Heart right ventricle (tissue), 16 donors: ENCODE measurements at regions of chr14 and their contacts with region 1.

Region 1: DNA sequence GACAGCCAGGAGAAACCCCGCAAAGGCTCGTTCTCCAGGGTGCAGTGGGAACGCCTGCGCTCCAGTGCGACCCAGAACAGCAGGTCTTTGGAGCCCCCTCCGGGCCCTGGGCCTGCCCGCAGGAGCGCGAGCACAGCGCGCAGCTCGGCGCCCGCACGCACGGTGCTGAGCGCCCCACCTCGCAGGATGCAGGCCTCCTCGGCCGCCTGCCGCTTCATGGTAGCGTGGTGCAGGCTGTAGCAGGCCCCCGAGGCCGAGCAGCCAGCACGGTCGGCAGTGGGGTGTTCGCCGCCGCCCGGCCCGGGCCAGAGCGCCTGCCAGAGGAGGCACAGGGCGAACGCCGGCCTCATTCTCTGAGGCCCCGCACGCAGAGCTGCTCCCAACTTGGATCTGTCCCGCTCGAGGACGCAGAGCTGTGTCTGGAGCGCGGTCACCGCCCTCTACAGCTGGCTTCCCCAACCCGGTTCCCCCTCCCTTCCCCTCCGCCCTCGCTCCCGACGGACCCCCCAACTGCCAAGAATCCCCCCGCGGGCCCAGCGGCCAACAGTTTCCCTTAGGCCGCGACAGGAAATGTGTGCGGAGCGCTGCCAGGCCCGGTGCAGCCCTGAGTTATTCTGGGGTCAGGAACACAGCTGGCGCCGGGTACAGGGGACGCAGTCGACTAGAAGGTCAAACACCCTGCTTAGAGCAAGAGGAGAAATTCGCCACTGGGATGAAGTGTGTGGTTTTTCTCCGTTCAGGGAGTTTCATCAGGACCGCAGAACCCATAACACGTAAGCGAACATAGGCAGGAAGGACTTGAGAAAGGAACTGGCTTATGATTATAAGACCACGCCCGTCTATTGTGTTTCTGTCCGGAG is at the start of gene CLEC14A:
- DNase-seq: peak; percentile 86 to 91
- ATAC-seq: peak; percentile 84 to 96 (median 90)
- H3K4me3 ChIP-seq: peak within 1 kb of the TSS; percentile 53 to 89 (median 72)
- H3K27ac ChIP-seq: peak within 1 kb of the TSS; percentile 93 to 100 (median 98)
- H3K4me1 ChIP-seq: peaks cover 0 to 15% (median 0%) of the 10 kb centered on the region in 9 donors
- H3K27me3 ChIP-seq: peaks cover 0 to 40% (median 14%) of the 10 kb centered on the region in 7 donors
- CTCF ChIP-seq: no peak
- total RNA-seq, gene CLEC14A: 26.6 to 45.9 (median 37.1) TPM

Region 2: DNA sequence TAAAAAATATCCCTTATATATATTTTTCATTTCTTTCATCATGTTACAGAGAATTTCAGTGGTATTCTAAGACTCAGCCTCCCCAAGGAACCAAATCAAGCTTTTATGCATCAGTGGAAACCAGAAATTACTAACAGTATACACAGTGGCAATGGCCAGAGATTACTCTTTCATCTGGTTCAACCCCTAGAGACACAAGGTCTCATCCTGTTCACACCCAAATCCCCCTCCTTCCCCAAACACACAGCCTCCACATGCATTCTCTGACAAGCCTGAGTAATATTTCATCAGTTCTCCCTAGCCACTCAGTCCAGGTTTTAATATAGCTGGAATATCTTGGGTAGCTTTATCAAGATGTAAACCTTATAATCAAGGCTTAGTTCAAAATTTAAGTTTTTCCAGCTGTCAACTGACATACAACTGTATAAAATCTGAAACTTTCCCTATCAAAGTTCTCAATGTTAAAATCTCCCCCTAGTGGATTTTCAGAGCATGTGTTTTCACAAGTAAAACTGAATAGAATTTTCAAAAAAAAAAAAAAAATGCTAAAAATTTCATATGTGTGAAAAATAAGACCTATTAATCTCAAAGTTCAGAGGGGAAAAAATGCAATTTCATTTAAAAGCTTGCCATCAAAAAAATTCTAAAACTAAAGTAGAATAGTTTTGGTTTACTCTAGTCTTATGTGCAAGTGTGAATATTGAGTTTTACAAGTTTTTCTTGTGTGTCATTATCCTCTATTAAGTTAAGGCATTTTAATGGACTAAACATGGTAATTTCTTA is 58.7 kb before region 1 on chr14:
- intact Hi-C with region 1: no loop called
- DNase-seq: no peak
- ATAC-seq: no peak
- H3K4me3 ChIP-seq: no peak overlapping the region
- H3K27ac ChIP-seq: no peak overlapping the region
- H3K4me1 ChIP-seq: no peaks in the 10 kb centered on the region
- H3K27me3 ChIP-seq: no peaks in the 10 kb centered on the region
- CTCF ChIP-seq: peak; percentile 15 to 71 (median 57)

Region 3: DNA sequence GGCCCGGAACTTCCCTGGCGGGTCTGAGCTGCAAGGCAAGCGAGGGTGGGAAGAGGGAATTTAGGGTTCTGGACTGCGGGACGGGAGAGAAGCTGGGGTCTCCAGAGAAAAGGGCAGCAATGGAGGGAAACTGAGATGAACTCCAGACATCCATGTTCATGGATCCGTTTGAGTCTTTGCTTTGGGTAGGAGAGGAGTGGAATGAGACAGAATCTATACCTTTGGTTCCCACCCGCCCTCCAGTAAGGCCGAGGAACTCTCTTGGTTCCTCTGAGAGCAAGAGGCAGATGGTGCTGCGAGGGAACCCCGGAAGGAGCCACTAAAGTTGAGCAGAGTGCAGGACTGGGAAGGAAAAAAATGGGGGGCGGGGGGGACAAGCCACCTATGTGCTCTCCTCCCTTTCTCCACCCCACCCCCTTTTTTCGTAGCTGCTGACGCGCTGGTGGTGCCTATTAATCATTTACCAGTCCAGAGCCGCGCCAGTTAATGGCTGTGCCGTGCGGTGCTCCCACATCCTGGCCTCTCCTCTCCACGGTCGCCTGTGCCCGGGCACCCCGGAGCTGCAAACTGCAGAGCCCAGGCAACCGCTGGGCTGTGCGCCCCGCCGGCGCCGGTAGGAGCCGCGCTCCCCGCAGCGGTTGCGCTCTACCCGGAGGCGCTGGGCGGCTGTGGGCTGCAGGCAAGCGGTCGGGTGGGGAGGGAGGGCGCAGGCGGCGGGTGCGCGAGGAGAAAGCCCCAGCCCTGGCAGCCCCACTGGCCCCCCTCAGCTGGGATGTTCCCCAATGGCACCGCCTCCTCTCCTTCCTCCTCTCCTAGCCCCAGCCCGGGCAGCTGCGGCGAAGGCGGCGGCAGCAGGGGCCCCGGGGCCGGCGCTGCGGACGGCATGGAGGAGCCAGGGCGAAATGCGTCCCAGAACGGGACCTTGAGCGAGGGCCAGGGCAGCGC is 47.0 kb before region 1 on chr14:
- intact Hi-C with region 1: no loop called
- DNase-seq: peak; percentile 6 to 24
- ATAC-seq: peak; percentile 53 to 75 (median 64)
- H3K4me3 ChIP-seq: peak overlapping the region; percentile 28 to 64 (median 52)
- H3K27ac ChIP-seq: peak overlapping the region in 2 of 10 donors; percentile 13 to 54
- H3K4me1 ChIP-seq: peaks cover 0 to 41% (median 23%) of the 10 kb centered on the region in 9 donors
- H3K27me3 ChIP-seq: peaks cover 0 to 67% (median 50%) of the 10 kb centered on the region in 7 donors
- CTCF ChIP-seq: peak in 5 of 9 donors; percentile 8 to 34 (median 33)

Region 4: DNA sequence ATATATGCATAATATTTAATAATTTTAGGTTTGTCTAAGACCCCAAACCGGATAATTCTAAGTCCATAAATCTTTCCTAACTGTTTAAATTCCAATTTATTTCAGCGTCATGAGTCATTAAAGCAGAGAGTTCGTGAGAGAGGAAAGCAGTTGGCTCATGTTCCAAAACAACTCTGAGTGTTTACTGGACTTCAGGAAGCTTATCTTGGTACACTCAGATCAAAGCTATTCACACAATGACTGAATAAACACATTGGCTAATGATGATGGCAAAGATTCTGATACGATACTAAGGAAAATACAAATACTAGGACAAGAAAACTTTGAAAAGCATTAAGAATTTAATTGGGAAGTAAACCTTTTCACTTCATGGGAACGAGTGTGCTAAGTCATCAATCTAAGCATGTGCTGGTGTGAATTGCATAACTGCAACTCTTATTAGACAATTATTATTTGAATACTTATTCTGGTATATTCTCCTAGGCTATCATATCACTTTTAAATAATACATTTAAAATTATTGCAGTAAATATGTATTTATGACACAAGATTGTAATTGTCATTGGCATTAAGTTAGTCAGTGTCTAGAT is 34.8 kb after region 1 on chr14:
- intact Hi-C with region 1: loop called in 3 of 10 experiments (anchors 2 to 5 kb)
- DNase-seq: peak in 1 of 2 donors; percentile 20
- ATAC-seq: peak in 7 of 8 donors; percentile 65 to 95 (median 90)
- H3K4me3 ChIP-seq: peak overlapping the region in 1 of 10 donors; percentile 6
- H3K27ac ChIP-seq: peak overlapping the region in 9 of 10 donors; percentile 47 to 81 (median 69)
- H3K4me1 ChIP-seq: peaks cover 0 to 32% (median 18%) of the 10 kb centered on the region in 9 donors
- H3K27me3 ChIP-seq: no peaks in the 10 kb centered on the region
- CTCF ChIP-seq: no peak

Region 5: GRCh38 chr14:38309522-38310277 is 53.8 kb after region 1 on chr14:
- intact Hi-C with region 1: loop called in 1 of 10 experiments (anchors 2 kb)
- DNase-seq: no peak
- ATAC-seq: peak in 6 of 8 donors; percentile 27 to 76 (median 58)
- H3K4me3 ChIP-seq: peak overlapping the region in 1 of 10 donors; percentile 8
- H3K27ac ChIP-seq: peak overlapping the region; percentile 1 to 89 (median 70)
- H3K4me1 ChIP-seq: peaks cover 0 to 38% (median 12%) of the 10 kb centered on the region in 9 donors
- H3K27me3 ChIP-seq: no peaks in the 10 kb centered on the region
- CTCF ChIP-seq: no peak

Region 6: DNA sequence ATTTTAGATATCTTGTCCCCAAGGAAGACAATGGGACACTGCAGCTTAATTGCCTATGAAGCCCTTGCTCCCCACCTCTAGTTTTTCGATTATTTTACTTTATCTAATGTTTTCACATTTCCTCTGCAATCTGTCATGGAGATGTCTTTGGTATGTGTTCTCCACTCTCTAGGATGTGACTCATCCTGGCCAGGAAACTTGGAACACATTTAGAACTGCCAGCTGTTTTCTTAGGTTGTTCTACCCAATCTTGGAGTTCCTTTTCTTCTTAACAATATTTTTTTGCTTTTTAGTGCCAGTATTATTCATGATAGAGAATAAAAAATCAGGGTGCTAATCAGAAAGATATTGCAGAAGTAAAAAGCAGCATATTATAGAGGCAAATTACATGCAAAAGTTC is 101.7 kb after region 1 on chr14:
- intact Hi-C with region 1: loop called in 3 of 10 experiments (anchors 5 to 10 kb)
- DNase-seq: peak in 1 of 2 donors; percentile 25
- ATAC-seq: peak; percentile 33 to 94 (median 82)
- H3K4me3 ChIP-seq: no peak overlapping the region
- H3K27ac ChIP-seq: peak overlapping the region in 5 of 10 donors; percentile 31 to 54 (median 47)
- H3K4me1 ChIP-seq: peaks cover 0 to 20% (median 0%) of the 10 kb centered on the region in 9 donors
- H3K27me3 ChIP-seq: no peaks in the 10 kb centered on the region
- CTCF ChIP-seq: no peak

Region 7: DNA sequence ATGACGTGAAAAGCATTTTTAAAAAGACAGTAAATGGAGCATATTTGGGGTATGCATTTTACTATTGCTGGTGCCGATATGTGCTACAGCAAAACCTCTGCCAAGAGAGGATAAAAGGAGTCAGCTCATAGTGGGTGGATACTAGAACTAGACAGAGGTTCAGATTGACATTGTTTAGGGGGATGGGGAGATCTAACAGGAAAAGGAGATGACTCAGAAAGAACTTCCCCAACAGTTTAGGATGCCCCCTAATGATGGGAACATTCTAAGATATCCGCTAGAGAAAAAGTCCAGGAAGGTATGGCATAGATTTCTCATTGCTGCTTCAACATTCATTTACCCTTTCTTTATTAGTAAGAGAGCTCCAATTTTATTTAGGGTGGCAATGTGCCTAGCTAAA is 110.5 kb after region 1 on chr14:
- intact Hi-C with region 1: loop called in 2 of 10 experiments (anchors 5 to 10 kb)
- DNase-seq: no peak
- ATAC-seq: peak in 4 of 8 donors; percentile 40 to 70 (median 54)
- H3K4me3 ChIP-seq: no peak overlapping the region
- H3K27ac ChIP-seq: peak overlapping the region in 2 of 10 donors; percentile 7 to 74
- H3K4me1 ChIP-seq: peaks cover 0 to 40% (median 7%) of the 10 kb centered on the region in 9 donors
- H3K27me3 ChIP-seq: no peaks in the 10 kb centered on the region
- CTCF ChIP-seq: no peak

Region 8: DNA sequence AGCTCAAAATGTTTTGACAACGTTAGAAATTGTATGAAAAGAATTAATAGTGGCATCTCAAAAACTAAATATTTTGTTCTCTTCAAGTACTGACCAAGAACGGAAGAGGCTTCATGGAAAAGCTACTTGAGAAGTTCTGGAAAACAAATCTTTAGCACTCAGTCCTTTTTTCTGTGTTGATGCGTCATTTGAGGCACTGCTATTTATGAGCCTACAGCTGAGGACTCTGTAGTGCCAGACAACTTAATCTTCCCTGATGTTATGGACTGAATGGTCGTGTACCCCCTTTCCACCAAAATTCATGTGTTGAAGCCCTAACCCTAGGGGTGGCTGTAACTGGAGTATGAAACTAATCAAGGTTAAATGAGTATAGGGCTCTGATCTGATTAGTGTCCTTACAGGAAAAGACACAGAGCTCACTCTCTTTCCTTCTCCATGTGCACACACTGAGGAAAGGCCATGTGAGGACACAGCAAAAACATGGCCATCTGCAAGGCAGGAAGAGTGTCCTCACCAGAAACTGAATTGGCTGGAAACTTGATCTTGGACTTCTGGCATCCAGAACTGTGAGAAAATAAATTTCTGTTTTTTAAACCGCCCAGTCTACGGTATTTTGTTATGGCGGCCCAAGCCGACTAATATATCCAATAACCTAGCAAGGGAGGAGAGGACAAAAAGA is 337.0 kb after region 1 on chr14:
- intact Hi-C with region 1: loop called in 1 of 10 experiments (anchors 10 kb)
- DNase-seq: peak in 1 of 2 donors; percentile 50
- ATAC-seq: peak in 7 of 8 donors; percentile 47 to 95 (median 93)
- H3K4me3 ChIP-seq: no peak overlapping the region
- H3K27ac ChIP-seq: peak overlapping the region in 6 of 10 donors; percentile 43 to 82 (median 61)
- H3K4me1 ChIP-seq: peaks cover 0 to 12% (median 0%) of the 10 kb centered on the region in 9 donors
- H3K27me3 ChIP-seq: no peaks in the 10 kb centered on the region
- CTCF ChIP-seq: no peak

Region 9: GRCh38 chr14:39005044-39005880 is 749.4 kb after region 1 on chr14:
- intact Hi-C with region 1: loop called in 1 of 10 experiments (anchors 10 kb)
- DNase-seq: no peak
- ATAC-seq: peak; percentile 73 to 94 (median 82)
- H3K4me3 ChIP-seq: no peak overlapping the region
- H3K27ac ChIP-seq: no peak overlapping the region
- H3K4me1 ChIP-seq: peaks cover 0 to 12% (median 0%) of the 10 kb centered on the region in 9 donors
- H3K27me3 ChIP-seq: no peaks in the 10 kb centered on the region
- CTCF ChIP-seq: no peak